ENCODE measurements at regions of chr11 and their contacts with region 1.

Region 1: GRCh38 chr11:46176402-46176801 is 55.1 kb upstream of the PHF21A start:
- DNase-seq: peak; percentile 65 to 80
- H3K4me3 ChIP-seq: peak overlapping the region; percentile 4; the same call in 1 of the 2 replicates
- H3K27ac ChIP-seq: no peak overlapping the region
- H3K4me1 ChIP-seq: peaks cover 16% of the 10 kb centered on the region
- H3K27me3 ChIP-seq: no peaks in the 10 kb centered on the region
- CTCF ChIP-seq: no peak

Region 2: GRCh38 chr11:45621588-45621987 is 554.8 kb before region 1 on chr11:
- CTCF ChIA-PET with region 1: no interaction called
- POLR2A ChIA-PET with region 1: no interaction called
- intact Hi-C with region 1: no loop called
- DNase-seq: no peak
- H3K4me3 ChIP-seq: no peak overlapping the region
- H3K27ac ChIP-seq: no peak overlapping the region
- H3K4me1 ChIP-seq: no peaks in the 10 kb centered on the region
- H3K27me3 ChIP-seq: peaks cover 22% of the 10 kb centered on the region; the same call in 1 of the 2 replicates
- CTCF ChIP-seq: no peak

Region 3: DNA sequence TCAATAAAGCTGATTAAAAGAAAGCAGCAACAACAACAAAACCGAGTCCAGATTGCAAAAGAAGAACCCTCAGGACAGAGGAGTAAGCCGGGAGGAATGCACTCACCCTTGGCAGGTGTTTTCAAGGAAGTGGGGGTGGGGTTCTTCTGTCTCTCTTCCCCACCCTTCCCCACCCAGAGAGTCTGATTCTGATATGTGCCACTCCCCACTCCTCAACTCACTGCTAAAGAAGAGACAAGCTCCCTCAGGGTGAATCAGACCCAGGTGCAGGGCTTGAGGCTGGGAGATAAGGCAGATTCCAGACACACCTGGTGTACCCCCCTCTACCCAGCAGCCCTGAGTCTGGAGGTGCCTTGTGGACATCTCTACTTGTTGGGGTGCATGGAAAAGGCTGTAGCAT is 16.7 kb before region 1 on chr11:
- CTCF ChIA-PET with region 1: no interaction called
- POLR2A ChIA-PET with region 1: no interaction called
- intact Hi-C with region 1: loop called (anchors 2 kb)
- DNase-seq: peak; percentile 84 to 97
- H3K4me3 ChIP-seq: no peak overlapping the region; the same call in 1 of the 2 replicates
- H3K27ac ChIP-seq: peak overlapping the region; percentile 71
- H3K4me1 ChIP-seq: peaks cover 38% of the 10 kb centered on the region
- H3K27me3 ChIP-seq: no peaks in the 10 kb centered on the region
- CTCF ChIP-seq: no peak

Region 4: GRCh38 chr11:46560300-46560991 is 384.0 kb after region 1 on chr11:
- CTCF ChIA-PET with region 1: no interaction called
- POLR2A ChIA-PET with region 1: no interaction called
- intact Hi-C with region 1: no loop called
- DNase-seq: peak in 1 of 2 experiments; percentile 14
- H3K4me3 ChIP-seq: no peak overlapping the region
- H3K27ac ChIP-seq: peak overlapping the region; percentile 51
- H3K4me1 ChIP-seq: peaks cover 76% of the 10 kb centered on the region
- H3K27me3 ChIP-seq: no peaks in the 10 kb centered on the region
- CTCF ChIP-seq: no peak